ENCODE measurements at regions of chr10 and their contacts with region 1.

Region 1: GRCh38 chr10:112389147-112389822 is 15.4 kb downstream of the ACSL5 start:
- DNase-seq: peak in 3 of 5 donors; percentile 33 to 48 (median 44)
- ATAC-seq: peak in 3 of 4 donors; percentile 85 to 96 (median 93)
- H3K4me3 ChIP-seq: no peak overlapping the region
- H3K27ac ChIP-seq: peak overlapping the region in 10 of 12 donors; percentile 24 to 83 (median 68)
- H3K4me1 ChIP-seq: peaks cover 0 to 22% (median 0%) of the 10 kb centered on the region in 12 donors
- H3K27me3 ChIP-seq: no peaks in the 10 kb centered on the region
- CTCF ChIP-seq: no peak
- POLR2A ChIP-seq: no peak

Region 2: GRCh38 chr10:112361951-112362751 is 27.1 kb before region 1 on chr10:
- intact Hi-C with region 1: loop called in 1 of 10 experiments (anchors 2 kb)
- DNase-seq: peak in 4 of 5 donors; percentile 58 to 84 (median 62)
- ATAC-seq: peak; percentile 80 to 87 (median 81)
- H3K4me3 ChIP-seq: no peak overlapping the region
- H3K27ac ChIP-seq: peak overlapping the region; percentile 67 to 86 (median 76)
- H3K4me1 ChIP-seq: peaks cover 12 to 48% (median 33%) of the 10 kb centered on the region in 12 donors
- H3K27me3 ChIP-seq: no peaks in the 10 kb centered on the region
- CTCF ChIP-seq: peak in 2 of 12 donors; percentile 11 to 21
- POLR2A ChIP-seq: no peak

Region 3: DNA sequence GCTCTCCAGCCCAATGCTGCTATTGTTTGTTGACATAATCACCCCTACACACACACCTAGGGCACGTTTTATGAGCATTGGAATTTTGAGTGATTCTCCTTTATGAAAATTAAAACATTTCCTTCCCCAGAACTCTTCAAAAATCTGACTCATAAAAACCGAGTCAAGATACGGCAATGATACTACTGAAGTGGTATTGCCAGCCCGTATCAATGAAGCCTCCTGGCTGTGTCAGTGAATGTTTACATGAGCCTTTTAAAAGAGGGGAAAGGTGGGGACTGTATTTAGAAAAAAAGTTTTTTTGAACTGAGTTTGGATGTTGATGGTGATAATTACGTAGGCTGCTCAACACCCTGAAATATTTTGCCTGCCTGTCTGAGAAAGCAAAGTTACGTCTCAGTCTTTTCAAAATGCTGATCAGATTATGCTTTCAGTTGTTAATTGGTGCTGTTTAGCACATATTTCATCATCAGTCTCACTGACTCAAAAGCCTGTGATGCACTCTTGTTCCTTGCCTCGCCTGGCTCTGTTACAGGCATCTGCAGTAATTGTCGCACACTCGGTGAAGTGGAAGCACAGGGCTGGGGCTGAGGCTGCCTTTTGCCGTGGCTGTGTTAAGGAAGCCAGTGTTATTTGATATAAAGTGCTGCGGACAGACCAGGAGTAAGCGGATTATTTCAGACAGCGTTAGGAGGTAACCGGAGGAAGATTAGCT is 403.4 kb after region 1 on chr10:
- intact Hi-C with region 1: no loop called
- DNase-seq: peak in 3 of 5 donors; percentile 18 to 58 (median 55)
- ATAC-seq: peak; percentile 73 to 89 (median 80)
- H3K4me3 ChIP-seq: peak overlapping the region in 4 of 12 donors; percentile 5 to 17 (median 14)
- H3K27ac ChIP-seq: peak overlapping the region in 1 of 12 donors; percentile 6
- H3K4me1 ChIP-seq: peaks cover 0 to 9% (median 3%) of the 10 kb centered on the region in 12 donors
- H3K27me3 ChIP-seq: no peaks in the 10 kb centered on the region
- CTCF ChIP-seq: no peak
- POLR2A ChIP-seq: no peak